ENCODE measurements at regions of chr5 and their contacts with region 1.

Region 1: GRCh38 chr5:83498585-83498984 is 27.0 kb downstream of the VCAN start:
- DNase-seq: no peak
- ATAC-seq: no peak
- H3K4me3 ChIP-seq: no peak overlapping the region
- H3K27ac ChIP-seq: peak overlapping the region in 1 of 2 donors; percentile 51
- H3K4me1 ChIP-seq: peaks cover 0 to 1% of the 10 kb centered on the region in 2 donors
- H3K27me3 ChIP-seq: no peaks in the 10 kb centered on the region

Region 2: DNA sequence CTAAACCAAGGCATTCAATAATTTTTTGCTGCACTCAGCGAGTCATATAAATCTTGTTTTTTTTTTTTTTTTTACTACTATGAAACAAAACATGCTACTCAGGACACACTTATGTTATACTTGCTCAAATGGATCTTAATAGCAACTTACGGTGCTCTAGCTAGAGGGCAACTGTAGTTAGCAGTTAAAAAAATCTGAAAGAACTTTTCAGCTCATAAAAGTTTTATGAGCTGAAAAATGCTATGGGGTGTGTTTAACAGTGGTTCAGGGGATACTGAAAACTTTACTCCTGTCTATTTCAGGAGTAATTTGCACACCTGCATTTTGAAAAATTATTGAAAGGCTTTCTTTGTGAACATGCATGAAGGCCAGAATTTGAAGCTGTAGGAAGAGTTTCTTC is 26.4 kb after region 1 on chr5:
- intact Hi-C with region 1: loop called in 1 of 2 experiments (anchors 1 kb)
- DNase-seq: no peak
- ATAC-seq: no peak
- H3K4me3 ChIP-seq: no peak overlapping the region
- H3K27ac ChIP-seq: no peak overlapping the region
- H3K4me1 ChIP-seq: no peaks in the 10 kb centered on the region
- H3K27me3 ChIP-seq: no peaks in the 10 kb centered on the region